ENCODE measurements at regions of chr4 and their contacts with region 1.

Region 1: DNA sequence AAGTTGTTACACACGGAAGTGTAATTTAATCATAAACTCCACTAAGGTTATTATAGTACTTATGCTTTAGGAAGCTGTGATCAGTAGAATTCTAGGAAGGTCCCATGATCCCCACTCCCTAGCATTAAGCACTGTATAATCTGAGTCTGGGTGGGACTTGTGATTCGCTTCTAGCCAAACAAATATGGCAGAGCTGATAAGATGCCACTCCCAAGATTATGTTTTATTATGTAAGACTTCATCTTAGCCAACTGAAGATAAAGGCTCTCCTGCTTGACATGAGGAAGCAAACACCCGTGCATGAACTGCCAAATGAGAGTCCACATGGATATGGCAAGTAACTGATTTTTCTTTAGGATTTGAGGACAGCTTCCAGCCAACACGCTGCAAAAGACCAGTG is 186.4 kb upstream of the NDST3 start:
- DNase-seq: peak in 1 of 3 donors; percentile 62
- ATAC-seq: peak; percentile 96
- H3K4me3 ChIP-seq: no peak overlapping the region
- H3K4me1 ChIP-seq: peaks cover 4% of the 10 kb centered on the region
- CTCF ChIP-seq: no peak

Region 2: DNA sequence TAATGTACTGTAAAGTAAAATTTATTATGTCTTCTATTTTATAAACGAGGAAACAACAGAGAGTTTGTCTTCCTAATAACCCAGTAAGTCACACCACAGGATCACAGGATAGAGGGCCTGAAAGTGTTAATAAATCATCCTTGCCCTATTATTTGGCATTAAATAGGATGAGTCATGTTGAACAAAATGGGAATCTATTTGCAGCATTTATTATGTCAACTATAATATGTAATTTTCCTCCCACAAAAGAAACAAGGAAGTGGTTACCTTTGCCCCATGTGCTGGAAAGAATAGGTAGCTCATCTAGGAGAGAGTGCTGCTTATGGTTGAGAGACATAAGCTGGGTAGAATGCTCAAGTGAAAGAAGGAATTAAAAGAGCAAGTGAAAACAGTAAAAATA is 51.2 kb before region 1 on chr4:
- intact Hi-C with region 1: no loop called
- DNase-seq: no peak
- ATAC-seq: no peak
- H3K4me3 ChIP-seq: no peak overlapping the region
- H3K4me1 ChIP-seq: no peaks in the 10 kb centered on the region
- CTCF ChIP-seq: no peak

Region 3: GRCh38 chr4:117873779-117874178 is 25.9 kb after region 1 on chr4:
- intact Hi-C with region 1: loop called in 1 of 2 experiments (anchors 2 kb)
- DNase-seq: no peak
- ATAC-seq: peak; percentile 84
- H3K4me3 ChIP-seq: no peak overlapping the region
- H3K4me1 ChIP-seq: peaks cover 2% of the 10 kb centered on the region
- CTCF ChIP-seq: no peak

Region 4: DNA sequence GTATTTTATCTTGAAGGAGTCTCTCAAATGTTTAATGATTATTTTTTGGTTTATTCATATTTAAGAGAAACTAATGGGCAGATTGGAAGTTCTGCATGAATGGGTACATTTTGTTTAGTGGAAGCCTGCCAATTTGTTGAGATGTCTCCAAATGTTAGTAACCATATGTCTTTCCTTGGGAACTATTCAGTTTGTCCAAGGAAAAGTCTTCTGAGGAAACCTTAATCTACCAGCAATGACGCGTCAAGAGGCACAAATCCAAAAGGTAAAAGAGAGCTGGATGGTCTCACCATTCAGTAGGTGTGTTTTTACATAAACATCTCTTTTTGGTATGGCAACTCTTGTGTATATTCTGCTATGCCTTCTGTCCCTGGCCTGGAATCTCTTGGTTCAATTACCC is 149.0 kb after region 1 on chr4:
- intact Hi-C with region 1: no loop called
- DNase-seq: no peak
- ATAC-seq: no peak
- H3K4me3 ChIP-seq: no peak overlapping the region
- H3K4me1 ChIP-seq: no peaks in the 10 kb centered on the region
- CTCF ChIP-seq: no peak

Measured in mucosa of descending colon (tissue), 3 donors.